Mammary epithelial cell (primary cell): ENCODE measurements at regions of chr3 and their contacts with region 1.

Region 1: GRCh38 chr3:43162230-43163084 is 56.6 kb upstream of the POMGNT2 start:
- DNase-seq: no peak
- H3K4me3 ChIP-seq: no peak overlapping the region
- H3K27ac ChIP-seq: no peak overlapping the region
- H3K4me1 ChIP-seq: no peaks in the 10 kb centered on the region
- H3K27me3 ChIP-seq: no peaks in the 10 kb centered on the region
- CTCF ChIP-seq: peak; percentile 11 to 48

Region 2: DNA sequence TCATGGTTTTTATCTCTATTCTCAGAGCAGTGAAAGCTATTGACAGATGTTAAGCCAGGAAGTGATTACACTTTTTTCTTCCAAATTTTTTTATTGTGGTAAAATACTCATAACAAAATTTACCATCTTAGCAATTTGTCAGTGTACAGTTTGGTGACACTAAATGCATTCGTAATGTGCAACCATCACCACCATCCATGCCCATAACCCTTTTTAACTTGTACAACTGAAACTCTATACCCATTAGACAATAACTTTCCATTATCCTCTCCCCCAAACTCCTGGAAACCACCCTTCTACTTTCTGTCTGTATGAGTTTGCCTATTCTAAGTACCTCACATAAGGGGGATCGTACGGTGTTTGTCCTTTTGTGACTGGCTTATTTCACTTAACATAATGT is 41.5 kb before region 1 on chr3:
- CTCF ChIA-PET with region 1: no interaction called
- dilution Hi-C with region 1: no loop called
- in situ Hi-C with region 1: no loop called
- intact Hi-C with region 1: no loop called
- DNase-seq: no peak
- H3K4me3 ChIP-seq: no peak overlapping the region
- H3K27ac ChIP-seq: no peak overlapping the region
- H3K4me1 ChIP-seq: no peaks in the 10 kb centered on the region
- H3K27me3 ChIP-seq: peaks cover 2% of the 10 kb centered on the region
- CTCF ChIP-seq: no peak

Region 3: DNA sequence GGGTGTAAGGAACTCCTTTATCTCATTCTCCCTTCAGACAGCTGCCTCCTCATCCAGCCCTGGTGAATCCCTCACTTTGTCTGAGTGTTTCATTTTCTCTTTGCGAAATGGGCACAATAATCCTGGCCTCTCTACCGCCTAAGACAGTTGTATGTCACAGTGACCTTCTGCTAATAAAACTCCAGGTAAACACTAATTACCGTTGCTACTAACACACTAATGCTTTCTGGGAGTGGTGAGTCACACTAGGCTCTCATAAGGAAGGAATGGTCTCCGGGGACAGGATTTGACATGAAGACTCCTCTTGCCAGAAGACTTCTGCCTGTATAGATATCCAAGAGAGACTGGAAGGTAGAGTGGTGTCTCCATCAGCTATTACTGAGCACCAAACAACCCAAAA is 52.2 kb after region 1 on chr3:
- CTCF ChIA-PET with region 1: no interaction called
- dilution Hi-C with region 1: no loop called
- in situ Hi-C with region 1: no loop called
- intact Hi-C with region 1: loop called (anchors 5 kb)
- DNase-seq: peak; percentile 85
- H3K4me3 ChIP-seq: no peak overlapping the region
- H3K27ac ChIP-seq: peak overlapping the region; percentile 72
- H3K4me1 ChIP-seq: peaks cover 31% of the 10 kb centered on the region
- H3K27me3 ChIP-seq: peaks cover 2% of the 10 kb centered on the region
- CTCF ChIP-seq: no peak

Region 4: DNA sequence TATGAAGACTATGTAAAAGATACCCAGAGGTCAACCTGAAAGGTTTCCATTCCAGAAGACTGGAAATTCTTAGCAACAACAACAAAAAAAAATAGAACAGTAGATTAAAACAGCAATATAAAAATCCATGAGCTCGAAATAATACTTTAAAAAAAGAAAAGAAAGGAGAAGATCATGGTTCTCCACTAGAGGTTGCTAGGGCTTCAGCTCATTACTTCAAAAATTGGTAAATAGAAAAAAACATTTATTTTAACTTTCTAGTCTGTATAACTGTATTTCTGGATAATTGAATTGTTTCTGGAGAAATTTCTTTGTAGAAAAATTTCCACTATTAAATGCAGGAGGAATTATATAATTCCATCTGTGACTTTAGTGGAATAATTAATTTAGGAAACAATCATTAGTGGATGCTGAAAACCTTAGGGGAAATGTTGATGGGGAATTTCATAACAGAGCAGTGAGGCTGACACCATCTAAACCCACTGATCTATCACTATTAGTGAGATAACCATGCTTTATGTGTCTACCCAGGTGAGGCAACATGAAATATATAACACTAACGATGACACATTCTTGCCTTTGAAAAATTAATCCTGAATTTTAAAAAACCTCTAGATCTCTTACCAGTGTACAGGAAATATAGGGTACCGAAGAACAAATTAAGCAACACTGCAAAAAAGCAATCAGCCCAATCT is 61.4 kb after region 1 on chr3:
- CTCF ChIA-PET with region 1: no interaction called
- dilution Hi-C with region 1: no loop called
- in situ Hi-C with region 1: no loop called
- intact Hi-C with region 1: loop called (anchors 1 kb)
- DNase-seq: no peak
- H3K4me3 ChIP-seq: no peak overlapping the region
- H3K27ac ChIP-seq: no peak overlapping the region
- H3K4me1 ChIP-seq: no peaks in the 10 kb centered on the region
- H3K27me3 ChIP-seq: peaks cover 2% of the 10 kb centered on the region
- CTCF ChIP-seq: peak; percentile 30 to 52

Region 5: GRCh38 chr3:43378066-43378935 is 215.8 kb after region 1 on chr3:
- CTCF ChIA-PET with region 1: no interaction called
- dilution Hi-C with region 1: no loop called
- in situ Hi-C with region 1: loop called in 1 of 2 experiments (anchors 25 kb)
- intact Hi-C with region 1: loop called (anchors 1 kb)
- DNase-seq: peak; percentile 43
- H3K4me3 ChIP-seq: no peak overlapping the region
- H3K27ac ChIP-seq: no peak overlapping the region
- H3K4me1 ChIP-seq: no peaks in the 10 kb centered on the region
- H3K27me3 ChIP-seq: no peaks in the 10 kb centered on the region
- CTCF ChIP-seq: peak; percentile 86 to 87

Region 6: GRCh38 chr3:43503067-43503728 is 340.7 kb after region 1 on chr3:
- CTCF ChIA-PET with region 1: interaction called, 4 read pairs
- dilution Hi-C with region 1: no loop called
- in situ Hi-C with region 1: no loop called
- intact Hi-C with region 1: loop called (anchors 1 kb)
- DNase-seq: no peak
- H3K4me3 ChIP-seq: no peak overlapping the region
- H3K27ac ChIP-seq: no peak overlapping the region
- H3K4me1 ChIP-seq: peaks cover 3% of the 10 kb centered on the region
- H3K27me3 ChIP-seq: no peaks in the 10 kb centered on the region
- CTCF ChIP-seq: peak; percentile 45 to 48

Region 7: GRCh38 chr3:43638594-43639447 is 476.4 kb after region 1 on chr3:
- CTCF ChIA-PET with region 1: no interaction called
- dilution Hi-C with region 1: no loop called
- in situ Hi-C with region 1: no loop called
- intact Hi-C with region 1: loop called (anchors 1 kb)
- DNase-seq: peak; percentile 58
- H3K4me3 ChIP-seq: no peak overlapping the region
- H3K27ac ChIP-seq: no peak overlapping the region
- H3K4me1 ChIP-seq: peaks cover 9% of the 10 kb centered on the region
- H3K27me3 ChIP-seq: no peaks in the 10 kb centered on the region
- CTCF ChIP-seq: peak; percentile 51 to 57